WTC11 (cell line): ENCODE measurements at regions of chr11 and their contacts with region 1.

Region 1: DNA sequence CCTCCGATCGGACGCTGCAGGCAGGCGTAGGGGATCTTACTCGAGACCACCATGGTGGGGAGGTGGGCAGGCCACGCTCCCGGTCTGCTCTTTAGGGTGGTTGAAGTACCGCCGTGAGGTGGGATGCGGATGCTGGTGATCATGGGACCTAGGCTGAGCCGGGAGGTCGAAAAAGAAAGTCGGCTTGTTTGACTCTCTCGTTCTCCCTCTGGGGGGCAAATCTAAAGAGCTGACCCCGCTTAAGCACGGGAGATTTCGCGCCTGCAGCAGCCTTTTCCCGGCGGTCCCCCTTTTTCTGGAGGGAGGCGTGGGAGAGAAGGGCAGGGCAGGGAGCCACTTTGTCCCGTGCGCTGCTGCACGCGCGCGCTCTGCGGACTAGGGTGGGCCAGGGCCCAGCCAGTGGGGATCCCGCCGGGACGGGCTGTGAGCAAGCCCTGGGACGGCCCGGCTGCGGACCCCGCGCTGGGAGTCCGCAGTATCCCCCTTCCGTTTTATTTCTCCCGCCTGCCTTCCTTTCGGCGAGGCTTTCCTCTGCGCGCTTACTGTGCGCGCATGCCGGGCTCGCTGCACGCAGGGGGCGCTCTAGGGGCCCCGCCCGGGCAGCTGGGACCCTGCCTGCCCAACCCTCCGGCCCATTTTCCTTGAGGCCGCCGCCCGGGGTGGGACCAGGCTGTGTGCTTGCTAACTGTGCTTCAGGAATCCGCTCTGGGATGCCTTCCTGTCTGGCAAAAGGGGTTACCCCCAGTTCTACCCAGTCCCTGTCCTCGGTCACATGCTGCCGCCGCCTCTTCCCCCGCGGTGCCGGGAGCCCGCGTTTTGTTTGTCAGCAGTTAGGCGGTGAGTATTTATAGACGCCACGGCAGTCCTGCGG is 81.0 kb downstream of the PRR5L start:
- DNase-seq: peak; percentile 76
- ATAC-seq: peak; percentile 87
- H3K4me3 Mint-ChIP-seq: peak overlapping the region; percentile 90
- H3K27ac Mint-ChIP-seq: no peak overlapping the region
- H3K4me1 Mint-ChIP-seq: peaks cover 12% of the 10 kb centered on the region
- H3K27me3 Mint-ChIP-seq: peaks cover 81% of the 10 kb centered on the region
- CTCF ChIP-seq: peak; percentile 59

Region 2: GRCh38 chr11:36156161-36156816 is 220.8 kb before region 1 on chr11:
- CTCF ChIA-PET with region 1: no interaction called
- POLR2A ChIA-PET with region 1: no interaction called
- DNase-seq: no peak
- ATAC-seq: peak; percentile 28
- H3K4me3 Mint-ChIP-seq: no peak overlapping the region
- H3K27ac Mint-ChIP-seq: no peak overlapping the region
- H3K4me1 Mint-ChIP-seq: peaks cover 32% of the 10 kb centered on the region
- H3K27me3 Mint-ChIP-seq: no peaks in the 10 kb centered on the region
- CTCF ChIP-seq: no peak

Region 3: DNA sequence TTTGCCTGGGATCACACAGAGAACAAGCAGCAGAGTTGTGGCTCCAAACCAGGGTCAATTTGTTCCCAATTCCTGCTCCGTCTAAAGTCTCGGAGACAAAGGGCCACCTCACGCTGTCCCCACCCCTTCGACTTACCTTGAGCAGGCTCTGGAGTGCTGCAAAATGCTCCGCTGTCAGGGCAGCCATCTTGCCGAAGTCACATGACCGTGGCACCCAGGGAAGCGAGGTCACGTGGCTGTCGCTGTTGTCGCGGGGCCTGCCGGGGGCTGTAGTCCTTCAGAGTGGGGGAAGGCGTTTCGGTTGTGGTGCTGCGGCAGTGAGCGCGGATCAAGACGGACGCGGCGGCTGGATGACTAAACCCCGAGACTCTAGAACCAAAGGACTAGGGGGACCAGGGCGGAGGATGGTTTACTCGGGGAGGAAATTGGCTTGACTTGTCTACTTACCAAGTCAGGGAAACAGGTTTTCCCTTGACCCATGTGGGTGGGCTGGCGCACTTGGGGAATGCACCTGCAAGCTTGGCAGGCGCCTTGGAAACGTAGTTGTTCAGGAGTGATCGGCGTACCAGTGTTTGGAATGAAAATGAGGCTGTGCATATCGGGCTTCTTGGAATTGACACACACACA is 87.8 kb before region 1 on chr11 and contains the start of gene COMMD9:
- CTCF ChIA-PET with region 1: interaction called, 17 read pairs
- POLR2A ChIA-PET with region 1: no interaction called
- DNase-seq: peak; percentile 96
- ATAC-seq: peak; percentile 94
- H3K4me3 Mint-ChIP-seq: peak within 1 kb of the TSS; percentile 92
- H3K27ac Mint-ChIP-seq: peak within 1 kb of the TSS; percentile 80
- H3K4me1 Mint-ChIP-seq: peaks cover 5% of the 10 kb centered on the region
- H3K27me3 Mint-ChIP-seq: peaks cover 24% of the 10 kb centered on the region
- CTCF ChIP-seq: no peak
- total RNA-seq, gene COMMD9: 26.1 to 33.3 TPM (median 27.1 TPM) in 3 replicates

Region 4: DNA sequence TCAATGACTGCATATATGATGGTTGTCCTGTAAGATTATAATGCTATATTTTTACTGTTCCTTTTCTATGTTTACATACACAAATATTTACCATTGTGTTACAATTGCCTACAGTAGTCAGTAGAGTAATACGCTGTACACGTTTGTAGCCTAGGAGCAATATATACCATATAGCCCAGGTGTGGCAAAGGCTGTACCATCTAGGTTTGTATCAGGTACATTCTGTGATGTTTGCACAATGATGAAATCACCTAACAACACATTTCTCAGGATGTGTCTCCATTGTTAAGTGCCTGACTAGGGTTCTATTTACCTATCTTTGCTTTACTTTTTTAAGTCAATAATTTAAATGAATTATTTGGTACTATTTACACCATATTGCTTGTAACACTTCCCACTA is 59.1 kb before region 1 on chr11:
- CTCF ChIA-PET with region 1: interaction called, 10 read pairs
- POLR2A ChIA-PET with region 1: no interaction called
- DNase-seq: no peak
- ATAC-seq: no peak
- H3K4me3 Mint-ChIP-seq: no peak overlapping the region
- H3K27ac Mint-ChIP-seq: no peak overlapping the region
- H3K4me1 Mint-ChIP-seq: peaks cover 43% of the 10 kb centered on the region
- H3K27me3 Mint-ChIP-seq: peaks cover 8% of the 10 kb centered on the region
- CTCF ChIP-seq: no peak

Region 5: GRCh38 chr11:36363361-36364268 is 13.5 kb before region 1 on chr11:
- CTCF ChIA-PET with region 1: interaction called, 14 read pairs
- POLR2A ChIA-PET with region 1: interaction called, 6 read pairs
- DNase-seq: peak; percentile 15
- ATAC-seq: peak; percentile 48
- H3K4me3 Mint-ChIP-seq: no peak overlapping the region
- H3K27ac Mint-ChIP-seq: peak overlapping the region; percentile 41; the same call in 1 of the 2 replicates
- H3K4me1 Mint-ChIP-seq: peaks cover 25% of the 10 kb centered on the region
- H3K27me3 Mint-ChIP-seq: peaks cover 9% of the 10 kb centered on the region; the same call in 1 of the 2 replicates
- CTCF ChIP-seq: no peak

Region 6: DNA sequence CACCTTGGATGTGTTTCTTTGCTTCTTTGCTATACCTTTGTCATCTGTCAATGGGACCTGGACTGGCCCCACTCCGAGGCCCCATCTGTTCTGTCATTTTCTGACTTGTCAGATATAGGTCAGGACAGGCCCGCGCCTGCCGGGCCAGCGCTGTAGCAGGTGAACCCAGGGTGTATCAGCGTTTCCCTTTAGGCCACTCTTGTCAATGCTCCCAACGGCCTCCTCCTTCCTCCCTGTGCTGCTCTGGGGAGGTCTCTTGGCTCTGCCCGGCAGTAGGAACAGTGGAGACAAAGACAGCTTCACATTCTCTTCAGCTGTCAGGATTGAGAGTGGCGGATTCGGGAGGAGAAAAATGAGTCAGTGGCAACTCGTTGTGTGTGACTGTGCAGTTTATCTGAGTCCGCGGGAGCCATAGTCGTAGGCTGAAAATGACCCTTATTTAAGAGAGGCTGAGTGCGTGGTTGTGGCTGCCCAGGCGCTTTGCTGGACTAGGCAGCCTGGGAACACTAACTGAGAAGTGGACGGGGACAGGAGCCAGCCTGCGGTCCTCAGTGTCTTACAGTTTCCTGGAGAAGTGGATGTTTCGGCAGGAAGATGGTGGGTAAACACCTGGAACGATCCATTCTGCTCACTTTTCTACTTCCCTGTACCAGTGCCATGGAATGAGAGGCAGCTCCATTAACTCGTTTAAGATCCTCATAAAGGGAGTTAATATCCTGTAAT is 21.3 kb after region 1 on chr11:
- CTCF ChIA-PET with region 1: no interaction called
- POLR2A ChIA-PET with region 1: no interaction called
- DNase-seq: no peak
- ATAC-seq: no peak
- H3K4me3 Mint-ChIP-seq: no peak overlapping the region
- H3K27ac Mint-ChIP-seq: no peak overlapping the region
- H3K4me1 Mint-ChIP-seq: no peaks in the 10 kb centered on the region
- H3K27me3 Mint-ChIP-seq: no peaks in the 10 kb centered on the region
- CTCF ChIP-seq: no peak

Region 7: GRCh38 chr11:36453678-36454077 is 76.6 kb after region 1 on chr11:
- CTCF ChIA-PET with region 1: no interaction called
- POLR2A ChIA-PET with region 1: no interaction called
- DNase-seq: no peak
- ATAC-seq: no peak
- H3K4me3 Mint-ChIP-seq: no peak overlapping the region
- H3K27ac Mint-ChIP-seq: no peak overlapping the region
- H3K4me1 Mint-ChIP-seq: peaks cover 21% of the 10 kb centered on the region
- H3K27me3 Mint-ChIP-seq: no peaks in the 10 kb centered on the region; the same call in none of the 2 replicates
- CTCF ChIP-seq: no peak

Region 8: DNA sequence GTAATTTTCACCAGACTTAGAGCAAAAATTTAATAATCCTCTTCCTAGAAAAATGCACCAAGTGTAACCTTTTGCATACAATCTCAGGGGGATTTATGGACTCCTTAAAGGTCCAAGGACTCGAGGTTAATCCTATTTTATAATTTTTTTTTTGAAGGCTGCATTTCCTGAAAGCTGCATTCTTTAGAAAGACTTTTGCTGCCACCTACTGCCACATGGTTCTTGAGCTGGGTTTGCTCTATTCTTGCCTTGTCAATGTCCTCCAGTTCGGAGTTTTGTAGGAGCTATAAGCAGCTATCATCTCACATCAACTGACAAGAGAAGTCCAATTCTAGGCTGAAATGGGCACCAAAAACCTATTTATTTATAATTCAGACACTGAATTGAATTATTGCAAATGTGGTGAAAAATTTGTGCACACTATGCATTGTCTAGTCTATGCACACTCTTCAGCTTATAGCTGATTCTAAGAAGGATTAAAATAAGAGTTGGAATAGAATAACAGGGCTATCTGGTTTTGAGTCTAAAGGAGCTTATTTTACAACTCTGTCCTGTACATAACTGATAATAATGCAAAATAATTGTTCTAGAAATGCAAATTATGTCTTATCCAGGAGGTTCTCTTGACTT is 101.7 kb after region 1 on chr11:
- CTCF ChIA-PET with region 1: interaction called, 13 read pairs
- POLR2A ChIA-PET with region 1: no interaction called
- DNase-seq: no peak
- ATAC-seq: peak; percentile 60
- H3K4me3 Mint-ChIP-seq: no peak overlapping the region
- H3K27ac Mint-ChIP-seq: no peak overlapping the region
- H3K4me1 Mint-ChIP-seq: no peaks in the 10 kb centered on the region
- H3K27me3 Mint-ChIP-seq: peaks cover 9% of the 10 kb centered on the region; the same call in 1 of the 2 replicates
- CTCF ChIP-seq: no peak